ENCODE measurements at regions of chr3 and their contacts with region 1.

Region 1: DNA sequence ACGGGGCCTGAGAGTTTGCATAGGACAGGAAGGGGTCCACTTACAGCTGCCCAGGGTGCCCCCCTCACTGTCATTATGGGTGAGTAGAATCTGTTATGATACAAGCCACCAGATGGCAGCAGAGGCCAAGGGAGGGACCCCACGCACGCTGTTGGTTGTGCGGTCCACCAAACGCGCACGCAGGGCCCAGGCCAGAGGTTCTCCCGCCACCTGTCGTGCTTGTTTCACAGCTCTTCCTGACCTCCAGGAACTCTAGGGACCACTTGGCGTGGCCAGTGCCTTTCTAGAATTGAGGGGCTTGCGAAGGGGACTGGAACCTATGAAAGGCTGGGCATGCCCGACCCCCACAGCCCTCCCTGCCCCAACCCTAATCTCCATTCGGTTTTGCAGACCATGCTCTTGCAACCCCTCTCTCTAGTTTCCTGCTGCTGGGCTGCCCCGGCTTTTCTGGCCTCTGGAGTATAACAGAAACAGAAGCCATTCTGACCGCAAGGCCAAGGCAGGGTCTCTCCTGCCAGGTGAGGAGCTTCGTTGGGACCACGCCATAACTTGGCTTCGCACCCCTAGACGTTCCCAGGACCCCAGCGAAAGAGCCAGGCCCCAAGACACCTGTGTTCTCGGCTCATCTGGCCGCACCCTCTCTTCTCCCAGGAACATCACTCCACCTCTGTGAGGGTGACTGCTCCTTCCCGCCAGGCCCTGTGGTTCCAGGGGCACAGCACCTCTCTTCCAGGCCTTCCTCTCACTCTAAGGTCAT is 46.0 kb downstream of the ALDH1L1 start:
- DNase-seq: peak; percentile 48 to 85
- H3K4me3 ChIP-seq: no peak overlapping the region
- H3K4me1 ChIP-seq: no peaks in the 10 kb centered on the region
- H3K27me3 ChIP-seq: no peaks in the 10 kb centered on the region; the same call in 1 of the 2 replicates

Region 2: DNA sequence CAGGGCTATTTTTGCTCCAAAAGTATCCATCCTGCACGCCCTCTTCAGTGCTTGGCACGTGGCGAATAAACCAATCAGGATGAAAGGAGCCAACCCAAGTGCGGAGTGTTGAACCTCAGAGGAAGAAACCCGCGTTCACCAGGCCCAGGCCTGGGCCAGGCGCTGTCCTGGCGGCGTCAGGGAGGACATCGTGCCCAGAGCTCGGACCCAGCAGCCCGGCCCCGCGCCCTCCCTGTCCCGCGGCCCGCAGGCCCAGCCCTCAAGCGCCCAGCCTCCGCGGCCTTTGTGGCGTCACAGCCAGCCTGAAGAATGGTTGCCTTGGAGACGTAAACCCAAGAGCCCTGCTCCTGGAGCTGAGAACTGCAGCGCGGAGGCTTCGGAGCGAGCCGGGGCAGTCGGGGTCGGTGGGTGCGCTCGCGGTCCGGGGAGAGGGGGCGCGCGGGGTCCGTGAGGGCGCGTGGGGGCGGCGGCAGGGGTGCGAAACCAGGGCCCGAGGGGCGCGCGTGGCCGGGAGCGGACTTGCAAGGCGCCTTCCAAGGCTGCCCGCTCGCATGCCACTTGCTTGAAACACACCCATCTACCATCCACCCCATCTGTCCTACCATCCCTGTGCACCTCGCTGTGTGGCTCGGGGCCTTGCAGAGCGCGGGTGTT is 260.3 kb after region 1 on chr3 and contains the start of gene CFAP100:
- in situ Hi-C with region 1: loop called (anchors 10 kb)
- DNase-seq: no peak
- H3K4me3 ChIP-seq: no peak within 1 kb of the TSS
- H3K4me1 ChIP-seq: no peaks in the 10 kb centered on the region
- H3K27me3 ChIP-seq: no peaks in the 10 kb centered on the region

Measured in HAP-1 (cell line).